ENCODE measurements at regions of chr2 and their contacts with region 1.

Region 1: DNA sequence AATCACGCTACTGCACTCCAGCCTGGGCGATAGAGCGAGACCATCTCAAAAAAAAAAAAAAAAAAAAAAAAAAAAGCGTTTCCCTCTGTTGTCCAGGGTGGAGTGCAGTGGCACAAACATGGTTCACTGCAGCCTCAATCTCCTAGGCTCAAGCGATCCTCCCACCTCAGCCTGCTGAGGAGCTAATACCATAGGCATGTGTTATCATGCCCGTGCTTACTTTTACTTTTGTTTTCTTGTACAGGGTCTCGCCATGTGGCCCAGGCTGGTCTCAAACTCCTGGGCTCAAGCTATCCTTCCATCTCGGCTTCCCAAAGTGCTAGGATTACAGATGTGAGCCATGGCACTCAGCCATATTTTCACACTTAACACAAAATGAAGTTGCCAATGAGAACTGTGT is 37.5 kb downstream of the PSME4 start:
- H3K4me3 Mint-ChIP-seq: no peak overlapping the region
- H3K27ac Mint-ChIP-seq: no peak overlapping the region
- H3K4me1 Mint-ChIP-seq: no peaks in the 10 kb centered on the region
- H3K27me3 Mint-ChIP-seq: no peaks in the 10 kb centered on the region

Region 2: GRCh38 chr2:53886406-53887280 is 46.7 kb before region 1 on chr2:
- intact Hi-C with region 1: loop called (anchors 5 kb)
- H3K4me3 Mint-ChIP-seq: no peak overlapping the region
- H3K27ac Mint-ChIP-seq: no peak overlapping the region
- H3K4me1 Mint-ChIP-seq: no peaks in the 10 kb centered on the region
- H3K27me3 Mint-ChIP-seq: no peaks in the 10 kb centered on the region

Measured in dendritic cell treated with granulocyte-macrophage colony-stimulating factor and Interleukin-4, amounts not matched to agents 40 ng/mL and 50 ng/mL, for 4 days (primary cell).